Activated CD4-positive, alpha-beta memory T cell treated with anti-CD3 and anti-CD28 coated beads for 36 hours (primary cell): ENCODE measurements at regions of chr5 and their contacts with region 1.

Region 1: GRCh38 chr5:139560752-139561654 is at the start of gene UBE2D2:
- DNase-seq: peak; percentile 98
- H3K4me3 Mint-ChIP-seq: peak within 1 kb of the TSS; percentile 90
- H3K27ac Mint-ChIP-seq: peak within 1 kb of the TSS; percentile 92
- H3K4me1 Mint-ChIP-seq: peaks cover 25% of the 10 kb centered on the region
- H3K27me3 Mint-ChIP-seq: no peaks in the 10 kb centered on the region
- total RNA-seq, gene UBE2D2: 271 to 285 TPM

Region 2: DNA sequence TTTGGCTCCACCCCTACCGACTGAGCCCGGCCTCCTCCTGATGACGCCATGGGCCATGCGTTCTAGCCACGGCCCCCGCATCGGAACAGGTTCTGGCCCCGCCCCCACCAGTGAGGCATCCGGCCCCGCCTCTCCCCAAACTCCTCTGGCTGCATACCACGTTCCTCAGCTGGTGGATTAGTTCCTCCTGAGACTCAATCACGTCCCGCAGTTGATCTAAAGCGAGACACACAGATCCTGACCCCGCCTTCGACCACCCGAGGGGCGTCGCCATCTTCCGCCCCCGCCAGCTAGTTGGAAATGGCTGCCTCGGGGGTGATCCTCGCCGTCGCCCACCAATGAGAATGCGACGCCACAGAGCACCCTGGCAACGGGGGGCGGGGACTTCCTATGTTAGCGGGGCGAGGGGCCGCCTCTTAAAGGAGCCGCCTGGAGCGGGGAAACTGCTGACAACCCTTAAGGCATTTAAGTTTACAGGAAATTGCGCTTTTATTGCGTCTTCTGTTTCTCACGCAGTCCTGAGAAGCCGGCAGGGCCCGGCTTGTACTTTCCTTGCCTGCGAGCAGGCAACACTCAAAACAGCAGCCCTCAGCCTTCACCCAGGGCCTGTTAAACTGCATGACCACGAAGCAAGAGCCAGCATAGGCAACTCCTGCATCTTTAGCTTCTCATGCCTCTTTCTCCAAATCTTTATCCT is 157.1 kb before region 1 on chr5 and contains the start of gene SPATA24:
- CTCF ChIA-PET with region 1: no interaction called
- POLR2A ChIA-PET with region 1: interaction called, 3 read pairs
- intact Hi-C with region 1: loop called (anchors 1 kb)
- DNase-seq: peak; percentile 100
- H3K4me3 Mint-ChIP-seq: peak within 1 kb of the TSS; percentile 91
- H3K27ac Mint-ChIP-seq: peak within 1 kb of the TSS; percentile 99
- H3K4me1 Mint-ChIP-seq: peaks cover 34% of the 10 kb centered on the region
- H3K27me3 Mint-ChIP-seq: no peaks in the 10 kb centered on the region
- total RNA-seq, gene SPATA24: 3.7 to 5.2 TPM

Region 3: DNA sequence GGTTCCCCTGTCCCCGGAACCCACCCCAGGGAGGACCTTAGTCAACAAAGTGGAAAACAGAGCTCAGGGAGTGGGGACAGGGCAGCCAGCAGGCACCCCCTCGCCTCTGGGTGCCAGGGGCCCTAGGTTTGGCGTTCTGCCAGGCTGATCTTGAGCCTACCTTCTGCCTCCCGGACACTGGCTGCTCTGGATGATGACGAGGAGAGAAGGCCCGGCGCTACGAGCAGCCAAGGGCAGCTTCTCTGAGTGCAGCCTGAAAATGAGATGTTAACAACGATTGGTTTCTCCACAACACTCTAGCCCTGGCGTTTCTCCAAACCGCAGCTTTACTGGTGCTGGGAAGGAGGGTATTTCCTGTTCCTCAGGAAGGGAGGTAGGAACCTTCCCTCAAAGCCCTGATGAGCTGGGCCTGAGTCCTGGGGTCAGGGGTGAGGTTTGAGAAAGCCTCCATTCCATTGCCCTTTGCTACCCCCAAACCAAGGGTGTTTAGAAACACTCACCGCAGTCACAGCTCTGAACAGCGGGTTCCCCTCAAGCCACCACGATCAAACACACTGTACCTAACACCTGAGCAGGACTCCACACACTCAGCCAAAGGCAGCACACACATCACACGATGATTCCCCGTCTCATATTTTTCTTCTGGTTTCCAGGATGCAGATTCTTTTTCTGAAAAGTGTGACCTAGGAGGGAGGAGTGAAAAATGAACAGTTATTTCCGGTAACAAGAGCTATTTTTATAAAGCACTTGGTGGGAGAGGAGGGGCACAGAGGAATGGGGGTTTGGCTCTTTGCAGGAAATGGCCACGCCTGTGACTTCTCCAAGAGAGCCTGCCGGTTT is 78.7 kb before region 1 on chr5 and contains the start of gene STING1:
- CTCF ChIA-PET with region 1: no interaction called
- POLR2A ChIA-PET with region 1: interaction called, 15 read pairs
- intact Hi-C with region 1: no loop called
- DNase-seq: peak; percentile 83
- H3K4me3 Mint-ChIP-seq: peak within 1 kb of the TSS; percentile 94
- H3K27ac Mint-ChIP-seq: peak within 1 kb of the TSS; percentile 99
- H3K4me1 Mint-ChIP-seq: peaks cover 38% of the 10 kb centered on the region
- H3K27me3 Mint-ChIP-seq: no peaks in the 10 kb centered on the region
- total RNA-seq, gene STING1: 339 to 344 TPM

Region 4: GRCh38 chr5:139492700-139493192 is 68.3 kb before region 1 on chr5:
- CTCF ChIA-PET with region 1: no interaction called
- POLR2A ChIA-PET with region 1: no interaction called
- intact Hi-C with region 1: no loop called
- DNase-seq: no peak
- H3K4me3 Mint-ChIP-seq: no peak overlapping the region
- H3K27ac Mint-ChIP-seq: no peak overlapping the region
- H3K4me1 Mint-ChIP-seq: peaks cover 35% of the 10 kb centered on the region
- H3K27me3 Mint-ChIP-seq: no peaks in the 10 kb centered on the region

Region 5: DNA sequence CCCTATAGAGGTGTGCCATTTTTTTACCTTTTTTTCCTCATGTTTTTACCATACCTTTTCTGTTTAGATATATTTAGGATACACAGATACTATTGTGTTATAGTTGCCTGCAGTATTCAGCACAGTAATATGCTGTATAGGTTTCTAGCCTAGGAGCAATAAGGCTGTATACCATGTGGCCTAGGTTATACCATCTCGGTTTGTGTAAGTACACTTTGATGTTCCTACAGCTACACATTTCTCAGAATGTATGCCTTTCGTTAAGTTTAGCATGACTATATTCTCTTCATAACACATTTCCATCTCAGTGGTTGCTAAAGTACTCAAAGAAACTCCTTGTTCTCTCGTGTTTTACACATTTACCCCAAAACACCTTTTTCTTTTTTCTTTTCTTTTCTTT is 23.1 kb after region 1 on chr5:
- CTCF ChIA-PET with region 1: no interaction called
- POLR2A ChIA-PET with region 1: interaction called, 4 read pairs
- intact Hi-C with region 1: loop called (anchors 1 kb)
- DNase-seq: no peak
- H3K4me3 Mint-ChIP-seq: no peak overlapping the region
- H3K27ac Mint-ChIP-seq: peak overlapping the region; percentile 62
- H3K4me1 Mint-ChIP-seq: peaks cover 54% of the 10 kb centered on the region
- H3K27me3 Mint-ChIP-seq: no peaks in the 10 kb centered on the region

Region 6: GRCh38 chr5:139745800-139746690 is 185.0 kb after region 1 on chr5:
- CTCF ChIA-PET with region 1: no interaction called
- POLR2A ChIA-PET with region 1: no interaction called
- intact Hi-C with region 1: loop called (anchors 5 kb)
- DNase-seq: peak; percentile 64
- H3K4me3 Mint-ChIP-seq: peak overlapping the region; percentile 14
- H3K27ac Mint-ChIP-seq: no peak overlapping the region
- H3K4me1 Mint-ChIP-seq: peaks cover 21% of the 10 kb centered on the region
- H3K27me3 Mint-ChIP-seq: peaks cover 10% of the 10 kb centered on the region

Region 7: GRCh38 chr5:140401362-140402257 is 840.6 kb after region 1 on chr5 and contains the start of gene ANKHD1:
- CTCF ChIA-PET with region 1: no interaction called
- POLR2A ChIA-PET with region 1: no interaction called
- intact Hi-C with region 1: no loop called
- DNase-seq: peak; percentile 99
- H3K4me3 Mint-ChIP-seq: no peak within 1 kb of the TSS
- H3K27ac Mint-ChIP-seq: no peak within 1 kb of the TSS
- H3K4me1 Mint-ChIP-seq: peaks cover 31% of the 10 kb centered on the region
- H3K27me3 Mint-ChIP-seq: no peaks in the 10 kb centered on the region
- total RNA-seq, gene ANKHD1: 102 to 105 TPM